AG04449 (cell line): ENCODE measurements at regions of chr9 and their contacts with region 1.

Region 1: GRCh38 chr9:124617471-124618141 is 110.4 kb upstream of the NR5A1 start:
- DNase-seq: no peak
- H3K4me3 ChIP-seq: no peak overlapping the region
- CTCF ChIP-seq: peak; percentile 88

Region 2: GRCh38 chr9:123808971-123809370 is 808.6 kb before region 1 on chr9:
- CTCF ChIA-PET with region 1: no interaction called
- POLR2A ChIA-PET with region 1: no interaction called
- DNase-seq: no peak
- H3K4me3 ChIP-seq: no peak overlapping the region
- CTCF ChIP-seq: no peak

Region 3: DNA sequence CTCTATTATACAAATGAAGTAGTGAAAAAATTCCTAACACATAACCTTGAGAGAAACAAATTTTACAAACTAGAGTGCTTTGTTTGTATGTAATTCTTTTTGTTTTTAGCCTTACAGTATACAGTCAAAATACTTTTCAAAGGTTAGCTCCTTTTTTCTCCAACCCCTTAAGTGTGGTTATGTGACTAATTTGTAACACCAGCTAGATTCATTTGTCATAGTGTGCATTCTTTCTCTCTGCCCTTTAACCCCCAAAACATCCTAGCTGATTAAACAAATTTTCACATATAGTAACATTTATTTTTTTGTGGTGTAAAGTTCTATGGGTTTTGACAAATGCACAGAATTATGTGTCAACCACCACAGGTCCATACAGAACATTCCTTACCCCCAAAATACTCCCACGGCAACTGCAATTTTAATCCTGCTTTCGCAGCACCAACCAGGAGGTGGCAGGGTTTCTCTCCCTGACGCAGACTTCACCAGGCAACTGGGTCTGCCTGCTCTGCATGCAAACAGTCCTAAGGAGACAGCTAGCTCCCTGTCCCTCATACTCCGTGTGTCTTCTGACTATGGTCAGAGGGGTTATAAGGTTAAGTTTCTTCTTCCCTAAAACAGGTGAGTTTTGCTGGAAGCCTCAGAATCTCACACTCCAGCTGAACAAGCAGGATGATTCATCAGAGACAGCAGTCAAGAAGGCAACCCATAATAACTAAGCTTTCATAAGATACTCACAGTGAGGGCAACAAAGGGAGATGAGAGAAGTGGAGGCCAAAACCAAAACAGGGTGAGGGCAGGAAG is 65.9 kb before region 1 on chr9:
- CTCF ChIA-PET with region 1: interaction called, 34 read pairs
- POLR2A ChIA-PET with region 1: no interaction called
- DNase-seq: no peak
- H3K4me3 ChIP-seq: no peak overlapping the region
- CTCF ChIP-seq: peak; percentile 78

Region 4: DNA sequence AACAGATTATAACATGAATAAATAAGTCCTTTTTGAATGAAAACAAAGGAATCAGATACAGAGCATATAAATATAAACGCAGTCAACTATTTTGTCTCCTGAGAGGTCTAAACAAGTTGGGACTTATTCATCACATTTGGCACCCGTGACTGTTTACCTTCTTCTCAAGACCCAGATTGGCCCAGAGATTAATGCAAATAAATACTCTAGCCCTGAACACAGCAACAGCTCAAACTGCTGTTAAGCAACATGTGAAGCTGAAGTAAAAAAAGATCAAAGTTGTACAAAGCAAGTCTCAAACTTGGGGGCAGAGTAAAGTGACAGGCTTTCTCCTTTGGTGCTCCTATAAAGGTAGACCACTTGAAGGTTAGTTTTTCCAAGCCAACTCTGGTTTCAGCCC is 15.4 kb before region 1 on chr9:
- CTCF ChIA-PET with region 1: interaction called, 46 read pairs
- POLR2A ChIA-PET with region 1: no interaction called
- DNase-seq: no peak
- H3K4me3 ChIP-seq: no peak overlapping the region
- CTCF ChIP-seq: no peak

Region 5: GRCh38 chr9:124658165-124659017 is 40.8 kb after region 1 on chr9:
- CTCF ChIA-PET with region 1: interaction called, 65 read pairs
- POLR2A ChIA-PET with region 1: interaction called, 4 read pairs
- DNase-seq: peak; percentile 97
- H3K4me3 ChIP-seq: peak overlapping the region; percentile 67
- CTCF ChIP-seq: no peak

Region 6: GRCh38 chr9:124708633-124709291 is 91.2 kb after region 1 on chr9:
- CTCF ChIA-PET with region 1: interaction called, 395 read pairs
- POLR2A ChIA-PET with region 1: no interaction called
- DNase-seq: no peak
- H3K4me3 ChIP-seq: no peak overlapping the region
- CTCF ChIP-seq: no peak

Region 7: DNA sequence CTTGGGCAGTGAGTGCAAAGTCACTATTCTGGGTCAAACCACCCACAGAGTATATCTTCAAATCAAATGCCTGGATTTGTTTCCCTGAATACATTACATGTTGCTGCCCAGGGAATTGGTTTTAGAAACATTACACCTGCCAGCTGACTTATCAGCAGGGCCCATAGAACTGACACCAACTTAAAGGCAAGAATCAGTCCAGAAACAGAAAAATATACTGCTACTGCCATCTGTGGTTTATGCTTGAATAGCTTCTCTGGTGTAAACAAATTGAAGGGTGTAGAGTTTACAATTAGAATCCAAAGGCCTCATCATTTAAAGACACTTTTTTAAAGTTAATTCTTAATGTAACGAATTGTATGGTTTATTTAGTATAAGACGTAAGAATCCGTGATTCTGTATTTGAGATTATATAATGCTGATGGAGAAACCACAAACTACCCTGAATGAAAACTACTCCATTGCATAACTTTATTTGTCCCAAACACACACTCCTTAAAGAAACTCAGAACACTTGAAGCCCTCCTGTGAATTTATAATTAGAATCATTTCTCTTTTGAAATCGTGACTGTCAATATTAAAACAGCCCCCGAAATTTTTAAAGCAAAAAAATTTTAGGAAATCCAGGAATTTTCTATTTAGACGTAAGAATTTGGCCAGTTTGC is 147.3 kb after region 1 on chr9:
- CTCF ChIA-PET with region 1: interaction called, 97 read pairs
- POLR2A ChIA-PET with region 1: no interaction called
- DNase-seq: no peak
- H3K4me3 ChIP-seq: no peak overlapping the region
- CTCF ChIP-seq: peak; percentile 20